H1 (cell line): ENCODE measurements at regions of chr4 and their contacts with region 1.

Region 1: GRCh38 chr4:73998040-73999011 is at the start of gene CXCL5:
- DNase-seq: peak; percentile 67 to 78
- H3K4me3 ChIP-seq: peak within 1 kb of the TSS; percentile 51 to 61 (median 56)
- H3K27ac ChIP-seq: peak within 1 kb of the TSS; percentile 76; the same call in 1 of the 2 replicates
- H3K4me1 ChIP-seq: peaks cover 0 to 8% (median 6%) of the 10 kb centered on the region in 4 experiments; a peak in 6 of 7 replicates
- H3K27me3 ChIP-seq: peaks cover 0 to 6% (median under 1%) of the 10 kb centered on the region in 4 experiments; a peak in 3 of 7 replicates
- CTCF ChIP-seq: peak; percentile 45 to 63 (median 58)
- EP300 ChIP-seq: peak in 1 of 2 experiments; percentile 52; a peak in 1 of 3 replicates
- POLR2A ChIP-seq: peak; percentile 3 to 8; a peak in 2 of 3 replicates
- RAD21 ChIP-seq: peak; percentile 72
- total RNA-seq, gene CXCL5: 10.9 and 11.4 TPM in 2 replicates

Region 2: GRCh38 chr4:73984736-73985527 is 13.4 kb before region 1 on chr4:
- CTCF ChIA-PET with region 1: interaction called, 4 read pairs
- POLR2A ChIA-PET with region 1: interaction called, 37 read pairs
- DNase-seq: peak in 1 of 2 experiments; percentile 78
- H3K4me3 ChIP-seq: no peak overlapping the region
- H3K27ac ChIP-seq: peak overlapping the region; percentile 62; the same call in 1 of the 2 replicates
- H3K4me1 ChIP-seq: peaks cover 0 to 19% (median 7%) of the 10 kb centered on the region in 4 experiments; a peak in 4 of 7 replicates
- H3K27me3 ChIP-seq: no peaks in the 10 kb centered on the region
- CTCF ChIP-seq: no peak
- EP300 ChIP-seq: peak in 1 of 2 experiments; percentile 95; a peak in 1 of 3 replicates
- POLR2A ChIP-seq: no peak
- RAD21 ChIP-seq: no peak

Region 3: GRCh38 chr4:74021601-74022000 is 23.3 kb after region 1 on chr4:
- CTCF ChIA-PET with region 1: interaction called, 4 read pairs
- POLR2A ChIA-PET with region 1: interaction called, 10 read pairs
- DNase-seq: no peak
- H3K4me3 ChIP-seq: no peak overlapping the region
- H3K27ac ChIP-seq: no peak overlapping the region
- H3K4me1 ChIP-seq: no peaks in the 10 kb centered on the region
- H3K27me3 ChIP-seq: no peaks in the 10 kb centered on the region
- CTCF ChIP-seq: no peak
- EP300 ChIP-seq: no peak
- POLR2A ChIP-seq: no peak
- RAD21 ChIP-seq: no peak

Region 4: DNA sequence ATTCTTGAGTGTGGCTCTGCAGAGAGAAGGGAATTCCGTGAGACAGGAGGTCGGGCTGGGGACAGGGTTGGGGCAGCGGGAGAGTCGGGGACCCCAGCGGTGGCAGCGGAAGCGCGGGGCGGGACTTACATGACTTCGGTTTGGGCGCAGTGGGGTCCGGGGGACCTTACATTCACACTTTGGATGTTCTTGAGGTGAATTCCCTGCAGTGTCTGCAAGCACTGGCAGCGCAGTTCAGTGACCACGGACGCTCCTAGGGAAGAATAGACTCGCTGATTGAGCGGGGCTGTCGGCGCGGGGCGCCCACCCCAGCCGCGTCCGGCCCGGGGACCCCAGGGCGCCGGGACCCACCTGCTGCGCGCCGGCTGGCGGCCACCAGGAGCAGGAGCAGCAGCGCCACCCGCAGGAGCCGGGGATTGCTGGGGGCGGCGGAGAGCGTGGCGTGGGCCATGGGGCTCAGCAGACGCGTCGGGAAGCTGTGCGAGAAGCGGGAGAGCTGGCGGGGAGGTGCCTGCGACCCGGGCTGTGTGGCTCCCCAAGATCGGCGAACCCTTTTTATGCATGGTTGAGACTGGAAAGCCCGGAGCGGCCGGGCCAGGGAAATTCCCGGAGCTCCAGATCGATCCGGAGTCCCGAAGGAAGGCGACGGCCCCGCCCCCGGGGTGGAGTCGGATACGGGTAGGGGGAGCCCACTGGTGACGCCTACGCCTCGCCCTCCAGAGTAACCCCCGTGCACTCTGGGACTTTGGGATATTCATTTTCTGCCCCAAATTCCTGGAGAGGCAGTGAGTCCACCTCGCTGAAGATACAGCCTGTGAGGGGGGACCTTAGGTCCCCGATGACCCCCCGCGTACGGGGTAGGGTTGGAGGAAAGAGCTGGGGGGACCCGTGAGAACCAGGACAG is 40.1 kb after region 1 on chr4 and contains the start of gene CXCL3:
- CTCF ChIA-PET with region 1: interaction called, 5 read pairs
- POLR2A ChIA-PET with region 1: interaction called, 17 read pairs
- DNase-seq: peak in 1 of 2 experiments; percentile 88
- H3K4me3 ChIP-seq: peak within 1 kb of the TSS; percentile 61 to 92 (median 73)
- H3K27ac ChIP-seq: 0 out of 2 replicates have a peak within 1 kb of the TSS, but pooled peaks have one; percentile 47
- H3K4me1 ChIP-seq: peaks cover 1 to 14% (median 4%) of the 10 kb centered on the region in 4 experiments; a peak in 4 of 7 replicates
- H3K27me3 ChIP-seq: no peaks in the 10 kb centered on the region
- CTCF ChIP-seq: peak in 2 of 3 experiments; percentile 1 to 26; a peak in 3 of 4 replicates
- EP300 ChIP-seq: no peak
- POLR2A ChIP-seq: peak in 1 of 2 experiments; percentile 64; a peak in 2 of 3 replicates
- RAD21 ChIP-seq: peak in 1 of 2 experiments; percentile 28; a peak in 1 of 4 replicates
- total RNA-seq, gene CXCL3: 5.2 TPM in 2 replicates

Region 5: GRCh38 chr4:74098450-74098994 is 100.2 kb after region 1 on chr4:
- CTCF ChIA-PET with region 1: interaction called, 4 read pairs
- POLR2A ChIA-PET with region 1: interaction called, 10 read pairs
- DNase-seq: peak in 1 of 2 experiments; percentile 63
- H3K4me3 ChIP-seq: peak overlapping the region; percentile 45 to 70 (median 54)
- H3K27ac ChIP-seq: no peak overlapping the region
- H3K4me1 ChIP-seq: peaks cover 0 to 3% (median 0%) of the 10 kb centered on the region in 4 experiments; a peak in 1 of 7 replicates
- H3K27me3 ChIP-seq: peaks cover 0 to 19% (median 8%) of the 10 kb centered on the region in 4 experiments; a peak in 5 of 7 replicates
- CTCF ChIP-seq: no peak
- EP300 ChIP-seq: no peak
- POLR2A ChIP-seq: no peak
- RAD21 ChIP-seq: no peak